ENCODE measurements at regions of chr12 and their contacts with region 1.

Region 1: GRCh38 chr12:57487597-57488401 is at the start of gene MARS1:
- DNase-seq: peak; percentile 92
- ATAC-seq: peak; percentile 97
- H3K4me3 Mint-ChIP-seq: peak within 1 kb of the TSS; percentile 99
- H3K27ac Mint-ChIP-seq: peak within 1 kb of the TSS; percentile 93
- H3K4me1 Mint-ChIP-seq: peaks cover 15% of the 10 kb centered on the region
- H3K27me3 Mint-ChIP-seq: no peaks in the 10 kb centered on the region; the same call in 1 of the 2 replicates
- CTCF ChIP-seq: no peak
- total RNA-seq, gene MARS1: 283 to 367 TPM (median 314 TPM) in 3 replicates

Region 2: DNA sequence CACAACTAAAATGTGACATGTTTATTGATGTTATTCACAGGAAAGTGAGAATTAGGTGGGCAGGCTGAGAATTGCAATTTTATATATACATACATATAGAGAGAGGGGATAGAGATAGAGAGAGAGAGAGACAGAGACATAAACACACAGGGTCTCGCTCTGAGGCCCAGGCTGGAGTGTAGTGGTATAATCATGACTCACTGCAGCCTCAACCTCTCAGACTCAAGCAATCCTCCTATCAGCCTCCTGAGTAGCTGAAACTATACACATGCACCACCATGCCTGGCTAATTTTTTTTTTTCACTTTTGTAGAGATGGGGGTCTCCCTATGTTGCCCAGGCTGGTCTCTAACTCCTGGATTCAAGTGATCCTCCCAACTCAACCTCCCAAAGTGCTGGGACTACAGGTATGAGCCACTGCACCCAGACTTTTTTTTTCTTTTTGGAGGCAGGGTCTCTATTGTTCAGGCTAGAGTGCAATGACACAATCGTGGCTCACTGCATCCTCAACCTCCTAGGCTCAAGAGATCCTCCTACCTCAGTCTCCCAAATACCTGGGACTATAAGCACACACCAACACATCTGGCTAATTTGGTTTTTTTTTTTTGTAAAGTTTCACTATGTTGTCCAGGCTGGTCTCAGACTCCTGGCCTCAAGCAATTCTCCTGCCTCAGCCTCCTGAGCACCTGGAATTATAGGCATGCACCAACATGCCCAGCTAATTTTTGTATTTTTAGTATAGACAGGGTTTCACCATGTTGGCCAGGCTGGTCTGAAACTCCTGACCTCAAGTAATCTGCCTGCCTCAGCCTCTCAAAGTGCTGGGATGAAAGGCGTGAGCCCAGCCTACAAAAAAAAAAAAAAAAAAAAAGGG is 105.9 kb before region 1 on chr12:
- CTCF ChIA-PET with region 1: no interaction called
- POLR2A ChIA-PET with region 1: no interaction called
- DNase-seq: no peak
- ATAC-seq: no peak
- H3K4me3 Mint-ChIP-seq: no peak overlapping the region
- H3K27ac Mint-ChIP-seq: no peak overlapping the region
- H3K4me1 Mint-ChIP-seq: peaks cover 4% of the 10 kb centered on the region
- H3K27me3 Mint-ChIP-seq: no peaks in the 10 kb centered on the region
- CTCF ChIP-seq: no peak

Region 3: DNA sequence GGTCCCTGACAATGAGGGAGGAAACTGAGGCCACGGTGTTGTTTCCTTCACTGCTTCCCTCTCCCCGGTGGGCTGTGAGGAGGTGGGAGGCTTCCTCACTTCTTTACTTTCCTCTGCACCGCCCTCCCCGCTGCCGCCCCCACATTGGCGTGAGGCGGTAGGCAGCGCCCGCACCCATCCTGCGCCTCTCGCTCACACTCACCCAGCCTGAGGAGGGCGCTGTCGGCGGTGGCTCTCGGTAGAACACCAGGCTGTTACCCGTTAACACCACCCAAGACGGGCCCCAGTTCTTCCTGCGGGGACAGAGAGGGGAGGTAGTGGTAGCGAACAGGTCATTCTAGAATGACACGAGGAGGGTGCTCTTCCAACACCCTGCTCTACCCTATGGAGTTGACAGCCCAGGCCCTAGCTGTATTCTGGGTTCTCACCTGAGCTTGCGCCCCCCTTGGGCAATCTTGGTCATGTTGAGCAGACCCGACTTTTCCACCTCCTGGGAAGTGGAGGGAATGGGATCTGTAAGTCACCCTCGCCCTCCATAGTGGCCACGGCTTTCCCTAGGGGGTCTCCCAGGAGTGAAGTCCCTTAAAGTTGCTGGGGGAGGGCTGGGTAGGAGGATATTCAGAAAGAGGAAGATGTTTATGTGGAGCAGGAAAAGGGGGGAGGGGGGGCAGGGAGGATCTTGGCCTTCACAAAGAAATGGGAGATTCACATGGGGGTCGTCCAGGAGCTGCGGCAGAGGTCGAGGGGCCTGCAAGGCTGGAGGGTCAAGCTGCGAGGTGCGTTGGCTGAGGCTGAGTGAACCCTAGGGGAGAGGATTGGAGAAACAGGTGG is 11.4 kb before region 1 on chr12:
- CTCF ChIA-PET with region 1: interaction called, 11 read pairs
- POLR2A ChIA-PET with region 1: interaction called, 8 read pairs
- DNase-seq: peak; percentile 68
- ATAC-seq: peak; percentile 44
- H3K4me3 Mint-ChIP-seq: peak overlapping the region; percentile 77
- H3K27ac Mint-ChIP-seq: no peak overlapping the region
- H3K4me1 Mint-ChIP-seq: peaks cover 35% of the 10 kb centered on the region
- H3K27me3 Mint-ChIP-seq: peaks cover 99% of the 10 kb centered on the region
- CTCF ChIP-seq: peak; percentile 63

Region 4: DNA sequence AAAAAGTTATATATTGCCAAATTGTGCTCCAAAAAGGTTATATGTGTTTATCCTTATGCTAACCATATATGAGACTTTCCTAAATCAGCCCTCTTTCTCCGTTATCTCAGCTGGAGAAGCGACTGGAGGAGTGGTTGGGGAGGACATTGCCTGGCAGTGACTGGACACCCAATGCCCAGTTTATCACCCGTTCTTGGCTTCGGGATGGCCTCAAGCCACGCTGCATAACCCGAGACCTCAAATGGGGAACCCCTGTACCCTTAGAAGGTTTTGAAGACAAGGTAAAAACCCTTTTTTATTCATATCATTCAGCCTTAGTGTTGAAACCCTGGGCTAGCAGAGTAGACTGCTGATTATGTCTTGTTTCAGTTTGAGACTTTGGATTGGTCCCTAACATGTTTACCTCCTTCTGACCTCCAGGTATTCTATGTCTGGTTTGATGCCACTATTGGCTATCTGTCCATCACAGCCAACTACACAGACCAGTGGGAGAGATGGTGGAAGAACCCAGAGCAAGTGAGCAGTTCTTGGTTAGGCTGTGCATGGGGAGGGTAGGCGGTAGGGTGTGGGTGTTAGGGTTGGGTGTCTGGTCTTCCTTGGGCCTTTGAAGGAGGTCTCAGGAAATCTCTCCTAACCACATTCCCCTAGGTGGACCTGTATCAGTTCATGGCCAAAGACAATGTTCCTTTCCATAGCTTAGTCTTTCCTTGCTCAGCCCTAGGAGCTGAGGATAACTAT is 24.0 kb after region 1 on chr12:
- CTCF ChIA-PET with region 1: no interaction called
- POLR2A ChIA-PET with region 1: no interaction called
- DNase-seq: no peak
- ATAC-seq: no peak
- H3K4me3 Mint-ChIP-seq: no peak overlapping the region
- H3K27ac Mint-ChIP-seq: no peak overlapping the region
- H3K4me1 Mint-ChIP-seq: no peaks in the 10 kb centered on the region
- H3K27me3 Mint-ChIP-seq: no peaks in the 10 kb centered on the region
- CTCF ChIP-seq: no peak